ENCODE measurements at regions of chr10 and their contacts with region 1.

Region 1: GRCh38 chr10:70146489-70147258 is at the start of gene TYSND1:
- DNase-seq: peak; percentile 100
- H3K27ac ChIP-seq: peak within 1 kb of the TSS; percentile 95
- CTCF ChIP-seq: peak; percentile 87

Region 2: DNA sequence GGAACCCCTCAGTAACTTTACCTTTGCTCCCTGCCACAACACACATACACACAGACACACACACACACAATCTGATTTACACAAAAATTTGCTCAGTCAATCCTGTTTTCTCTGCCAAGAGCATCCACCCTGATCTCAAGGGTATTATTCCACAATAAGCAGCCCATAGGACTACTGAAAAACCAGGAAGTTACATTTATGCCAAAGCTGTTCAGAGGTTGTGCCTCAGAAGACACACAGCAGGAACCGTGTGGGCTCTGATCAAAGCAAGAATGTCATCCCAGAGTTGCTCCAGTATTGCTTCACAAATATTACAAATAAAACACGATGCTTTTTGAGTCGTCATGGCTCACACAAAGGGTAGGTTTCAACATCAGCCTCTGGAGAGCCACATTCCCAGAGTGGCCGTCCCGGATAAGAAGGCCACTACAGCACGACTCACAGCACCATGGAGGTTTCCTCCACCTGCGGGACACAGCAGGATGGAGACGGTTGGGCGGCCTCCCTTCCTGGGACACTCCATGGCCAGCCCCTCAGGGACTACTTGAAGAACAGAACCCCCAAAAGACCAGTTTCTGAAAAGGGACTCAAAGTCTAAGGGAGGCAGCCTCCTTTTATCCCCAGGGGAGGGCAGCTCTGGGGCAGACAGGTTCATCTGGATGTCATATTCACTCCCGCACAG is 15.7 kb before region 1 on chr10:
- CTCF ChIA-PET with region 1: interaction called, 12 read pairs
- POLR2A ChIA-PET with region 1: interaction called, 5 read pairs
- DNase-seq: no peak
- H3K27ac ChIP-seq: peak overlapping the region; percentile 80
- CTCF ChIP-seq: no peak

Region 3: DNA sequence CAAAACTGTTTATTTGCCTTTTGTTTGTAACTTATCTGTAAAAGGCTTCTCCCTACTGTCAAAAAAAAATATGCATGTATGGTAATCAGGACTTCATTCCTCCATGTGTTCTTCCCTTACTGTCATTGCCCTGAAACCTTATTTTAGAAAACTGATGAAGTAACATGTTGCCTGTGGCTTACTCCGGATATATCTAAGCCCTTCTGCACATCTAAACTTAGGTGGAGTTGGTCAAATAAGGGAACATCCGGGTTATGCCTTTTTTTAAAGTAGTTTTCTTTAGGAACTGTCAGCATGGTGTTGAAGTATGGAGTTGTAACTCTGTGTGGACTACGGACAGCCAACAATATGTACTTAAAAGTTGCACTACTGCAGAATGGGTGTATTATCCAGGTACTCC is 17.5 kb after region 1 on chr10:
- CTCF ChIA-PET with region 1: no interaction called
- POLR2A ChIA-PET with region 1: no interaction called
- DNase-seq: no peak
- H3K27ac ChIP-seq: no peak overlapping the region
- CTCF ChIP-seq: no peak

Region 4: DNA sequence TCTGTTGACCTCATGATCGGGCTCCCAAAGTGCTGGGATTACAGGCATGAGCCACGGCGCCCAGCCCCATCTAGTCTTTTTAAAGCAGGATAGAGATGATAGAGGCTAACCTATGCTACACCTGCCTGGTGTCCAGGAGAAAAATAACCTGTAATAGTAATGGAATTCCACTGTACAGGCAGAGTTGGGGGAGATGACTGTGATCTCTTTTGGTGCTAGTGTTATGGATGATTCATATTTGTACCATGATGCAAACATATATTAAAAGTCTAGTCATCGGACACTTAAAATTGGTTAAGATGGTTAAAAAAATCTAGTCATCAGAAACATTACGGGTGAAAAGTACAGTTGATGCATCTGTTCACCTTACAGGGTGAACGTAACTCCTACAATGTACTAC is 29.8 kb after region 1 on chr10:
- CTCF ChIA-PET with region 1: interaction called, 6 read pairs
- POLR2A ChIA-PET with region 1: interaction called, 11 read pairs
- DNase-seq: peak; percentile 53
- H3K27ac ChIP-seq: no peak overlapping the region
- CTCF ChIP-seq: no peak

Measured in RWPE1 (cell line).